Ascending aorta (tissue), 2 donors: ENCODE measurements at regions of chr4 and their contacts with region 1.

Region 1: GRCh38 chr4:149897783-149898182 is 82.1 kb upstream of the IQCM start:
- DNase-seq: no peak
- H3K4me3 ChIP-seq: no peak overlapping the region
- H3K27ac ChIP-seq: no peak overlapping the region
- H3K4me1 ChIP-seq: no peaks in the 10 kb centered on the region
- H3K27me3 ChIP-seq: no peaks in the 10 kb centered on the region
- CTCF ChIP-seq: peak in 2 of 3 experiments; percentile 10 to 42

Region 2: DNA sequence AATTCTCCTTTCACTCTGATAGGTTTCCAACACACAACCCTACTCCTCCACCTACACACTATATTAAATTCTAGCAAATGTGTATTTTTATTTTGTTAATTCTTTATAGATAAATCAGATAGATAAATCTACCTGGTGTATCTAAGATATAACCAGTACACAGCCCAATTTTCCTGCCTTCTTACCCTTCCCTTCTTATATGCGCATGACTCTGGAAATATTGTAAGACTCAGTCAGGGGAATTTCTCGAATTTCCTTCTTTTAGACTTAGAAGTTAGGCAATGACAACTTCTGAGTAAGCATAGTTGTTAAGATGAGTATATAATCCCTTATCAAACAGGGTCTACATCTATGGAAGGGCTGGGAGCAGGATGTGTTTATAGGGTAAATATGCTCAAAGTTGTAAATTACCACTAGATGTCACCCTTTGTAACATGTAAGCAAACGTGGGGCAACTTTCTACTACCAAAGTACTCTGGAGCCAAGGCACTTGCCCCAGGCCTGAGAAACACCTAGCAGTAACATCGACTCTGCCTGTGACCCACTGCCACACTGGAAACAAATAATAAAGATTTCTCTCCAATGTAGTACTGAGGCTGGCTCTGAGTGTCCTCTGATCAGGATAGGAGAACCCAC is 526.9 kb before region 1 on chr4:
- intact Hi-C with region 1: loop called (anchors 5 kb)
- DNase-seq: no peak
- H3K4me3 ChIP-seq: no peak overlapping the region
- H3K27ac ChIP-seq: no peak overlapping the region
- H3K4me1 ChIP-seq: peaks cover 0 to 4% of the 10 kb centered on the region in 2 donors
- H3K27me3 ChIP-seq: no peaks in the 10 kb centered on the region
- CTCF ChIP-seq: peak in 2 of 3 experiments; percentile 12 to 15